AG04450 (cell line): ENCODE measurements at regions of chr20 and their contacts with region 1.

Region 1: GRCh38 chr20:23106261-23106851 is 20.2 kb upstream of the CD93 start:
- DNase-seq: peak; percentile 47
- H3K4me3 ChIP-seq: no peak overlapping the region
- H3K27ac ChIP-seq: peak overlapping the region; percentile 21
- H3K27me3 ChIP-seq: peaks cover under 1% of the 10 kb centered on the region
- CTCF ChIP-seq: peak; percentile 43

Region 2: GRCh38 chr20:23061734-23062561 is 44.4 kb before region 1 on chr20:
- CTCF ChIA-PET with region 1: interaction called, 10 read pairs
- POLR2A ChIA-PET with region 1: no interaction called
- DNase-seq: peak; percentile 21
- H3K4me3 ChIP-seq: no peak overlapping the region
- H3K27ac ChIP-seq: no peak overlapping the region
- H3K27me3 ChIP-seq: peaks cover 7% of the 10 kb centered on the region
- CTCF ChIP-seq: peak; percentile 63